ENCODE measurements at regions of chr15 and their contacts with region 1.

Region 1: DNA sequence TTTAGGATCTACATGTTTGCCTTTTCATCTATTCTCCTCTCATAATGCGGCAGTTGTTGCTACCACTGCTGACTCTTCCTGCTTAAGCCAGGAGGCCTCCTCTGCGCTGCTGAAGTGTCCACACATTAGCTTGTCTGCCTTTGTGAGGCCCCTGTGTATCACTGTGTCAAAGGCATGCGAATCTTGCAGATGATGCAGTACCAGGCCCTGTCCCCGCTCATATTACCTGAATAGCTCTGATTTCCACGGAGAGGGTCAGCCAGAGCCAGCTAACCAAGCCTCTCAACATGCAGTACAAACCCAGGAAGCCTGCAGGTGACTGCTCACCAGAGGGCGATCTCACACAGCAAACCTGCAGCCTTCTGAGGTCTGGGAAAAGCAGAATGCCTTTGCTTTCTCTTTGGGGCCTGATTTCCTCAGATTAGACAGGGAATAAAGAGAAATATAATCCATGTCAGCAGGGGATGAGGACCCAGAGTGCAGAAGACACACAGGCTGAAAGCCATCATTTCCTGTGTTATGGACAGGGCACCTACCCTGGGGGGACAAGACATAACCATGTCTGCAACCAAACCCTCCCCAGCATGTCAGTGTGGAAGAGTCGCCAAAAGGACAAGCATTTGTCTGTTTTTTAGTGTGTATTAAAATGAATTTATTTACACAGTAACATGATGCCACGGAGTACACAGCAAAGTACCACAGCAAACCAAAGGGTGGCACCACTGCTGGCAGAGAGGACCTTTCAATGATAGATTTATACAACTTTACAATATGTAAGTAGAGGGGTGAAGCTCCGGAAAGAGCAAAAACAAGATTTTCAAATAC is 36.8 kb upstream of the TSPAN3 start:
- DNase-seq: peak; percentile 53 to 60
- ATAC-seq: peak; percentile 89 to 95
- H3K4me3 ChIP-seq: no peak overlapping the region
- H3K27ac ChIP-seq: no peak overlapping the region
- H3K4me1 ChIP-seq: no peaks in the 10 kb centered on the region
- CTCF ChIP-seq: peak; percentile 72
- EP300 ChIP-seq: no peak
- POLR2A ChIP-seq: no peak
- RAD21 ChIP-seq: peak; percentile 80 to 89

Region 2: DNA sequence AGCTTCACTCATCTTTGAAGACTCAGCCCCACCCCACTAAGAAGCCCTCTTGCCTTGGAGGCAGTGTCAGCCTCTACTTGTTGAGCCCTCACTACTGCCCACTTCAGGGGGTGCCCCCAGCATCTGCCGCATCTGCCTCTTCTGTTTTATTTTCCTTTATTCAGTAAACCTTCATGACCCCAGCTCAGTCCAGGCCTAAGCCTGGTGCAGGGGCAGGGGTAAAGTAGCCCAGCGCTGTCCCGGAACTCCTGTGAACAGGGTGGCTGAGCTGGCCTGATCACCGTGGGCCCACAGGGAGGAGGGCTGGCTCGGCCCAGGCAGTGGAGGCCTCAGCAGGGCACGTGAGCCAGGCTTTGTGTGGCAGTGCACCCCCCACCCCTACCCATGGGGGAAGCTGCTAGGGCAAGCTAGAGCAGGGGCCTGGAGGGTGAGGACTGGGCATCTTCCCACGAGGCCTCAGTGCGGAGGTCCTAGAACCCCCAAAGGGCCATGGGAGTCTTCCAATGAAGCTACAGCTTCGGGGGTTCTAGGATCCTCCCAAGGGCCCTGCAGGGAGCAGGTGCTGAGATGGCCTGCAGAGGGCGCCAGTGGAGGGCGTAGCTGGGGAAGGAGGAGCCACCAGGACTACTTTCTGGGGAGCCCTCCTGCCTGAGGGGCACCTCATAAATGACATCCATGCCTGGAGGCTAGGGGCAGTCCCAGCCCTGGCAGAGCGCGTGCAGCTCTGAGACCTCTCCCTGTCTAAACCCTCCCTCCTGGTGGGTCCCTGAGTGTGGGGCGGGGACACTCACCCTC is 72.9 kb before region 1 on chr15:
- CTCF ChIA-PET with region 1: interaction called, 10 read pairs
- POLR2A ChIA-PET with region 1: no interaction called
- DNase-seq: no peak
- ATAC-seq: peak in 1 of 2 experiments; percentile 55; a peak in 3 of 6 replicates
- H3K4me3 ChIP-seq: no peak overlapping the region
- H3K27ac ChIP-seq: no peak overlapping the region
- H3K4me1 ChIP-seq: no peaks in the 10 kb centered on the region
- CTCF ChIP-seq: peak; percentile 61
- EP300 ChIP-seq: no peak
- POLR2A ChIP-seq: no peak
- RAD21 ChIP-seq: peak; percentile 33 to 37; a peak in 2 of 5 replicates

Region 3: DNA sequence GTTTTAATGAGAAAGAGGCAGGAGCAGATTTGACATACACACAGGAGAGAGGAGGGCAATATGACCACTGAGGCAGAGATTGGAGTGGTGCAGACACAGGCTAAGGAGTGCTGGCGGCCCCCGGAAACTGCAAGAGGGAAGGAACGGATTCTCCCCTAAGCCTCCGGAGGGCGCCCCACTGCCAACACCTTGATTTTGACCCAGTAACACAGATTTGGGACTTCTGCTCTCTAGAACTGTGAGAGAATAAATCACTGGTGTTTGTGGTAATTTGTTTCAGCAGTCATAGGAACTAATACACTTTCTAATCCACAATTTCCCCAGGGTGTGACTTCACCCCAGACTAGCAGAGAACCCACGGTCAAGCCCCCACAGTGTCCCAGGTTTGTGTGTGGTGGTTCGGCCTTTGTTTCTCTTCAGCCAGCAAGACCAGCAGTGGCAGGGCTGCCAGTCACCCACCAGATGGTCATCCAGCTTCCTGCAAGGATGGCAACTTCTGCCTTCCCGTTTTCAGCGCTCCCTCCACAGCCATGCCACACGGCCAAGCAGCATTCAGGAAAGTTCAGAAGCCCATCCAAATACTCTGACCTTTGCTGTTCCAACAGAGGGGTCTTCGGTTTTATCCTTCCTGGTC is 13.2 kb before region 1 on chr15:
- CTCF ChIA-PET with region 1: interaction called, 23 read pairs
- POLR2A ChIA-PET with region 1: no interaction called
- DNase-seq: no peak
- ATAC-seq: peak in 1 of 2 experiments; percentile 65; a peak in 3 of 6 replicates
- H3K4me3 ChIP-seq: no peak overlapping the region
- H3K27ac ChIP-seq: no peak overlapping the region
- H3K4me1 ChIP-seq: no peaks in the 10 kb centered on the region
- CTCF ChIP-seq: no peak; the same call in 2 of the 3 replicates
- EP300 ChIP-seq: no peak
- POLR2A ChIP-seq: no peak
- RAD21 ChIP-seq: peak in 1 of 2 experiments; percentile 27; a peak in 1 of 5 replicates

Region 4: GRCh38 chr15:77118882-77119321 is 11.2 kb after region 1 on chr15:
- CTCF ChIA-PET with region 1: interaction called, 49 read pairs
- POLR2A ChIA-PET with region 1: no interaction called
- DNase-seq: peak; percentile 64 to 74
- ATAC-seq: peak; percentile 83 to 93
- H3K4me3 ChIP-seq: no peak overlapping the region
- H3K27ac ChIP-seq: no peak overlapping the region
- H3K4me1 ChIP-seq: no peaks in the 10 kb centered on the region
- CTCF ChIP-seq: peak; percentile 96
- EP300 ChIP-seq: no peak
- POLR2A ChIP-seq: no peak
- RAD21 ChIP-seq: peak; percentile 93

Measured in A549 (cell line).